ENCODE measurements at regions of chr18 and their contacts with region 1.

Region 1: GRCh38 chr18:43341014-43341413 is 63.7 kb upstream of the SYT4 start:
- DNase-seq: no peak
- H3K4me3 ChIP-seq: no peak overlapping the region
- H3K27ac ChIP-seq: no peak overlapping the region
- H3K4me1 ChIP-seq: no peaks in the 10 kb centered on the region
- H3K27me3 ChIP-seq: no peaks in the 10 kb centered on the region
- CTCF ChIP-seq: no peak
- EP300 ChIP-seq: no peak
- POLR2A ChIP-seq: no peak

Region 2: DNA sequence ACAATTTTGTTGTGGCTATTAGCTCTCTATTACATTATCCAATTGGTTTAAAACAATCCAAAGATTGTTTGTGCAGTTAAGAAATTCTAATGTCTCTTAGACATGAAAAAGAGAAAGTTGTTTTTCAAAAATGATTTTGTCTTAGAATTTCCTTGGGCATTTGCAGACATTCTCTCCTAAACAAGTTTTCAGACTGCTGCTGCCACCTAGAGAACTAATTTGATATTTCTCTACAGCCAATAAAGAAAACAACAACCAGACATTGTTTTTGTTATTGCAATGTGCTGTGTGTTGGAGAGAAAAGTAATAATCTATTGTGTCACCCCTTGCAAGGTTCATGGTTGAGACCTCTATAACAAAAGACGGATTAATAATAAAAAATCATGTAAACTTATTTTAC is 55.3 kb after region 1 on chr18:
- intact Hi-C with region 1: loop called (anchors 10 kb)
- DNase-seq: no peak
- H3K4me3 ChIP-seq: no peak overlapping the region
- H3K27ac ChIP-seq: no peak overlapping the region
- H3K4me1 ChIP-seq: no peaks in the 10 kb centered on the region
- H3K27me3 ChIP-seq: no peaks in the 10 kb centered on the region
- CTCF ChIP-seq: peak in 1 of 3 experiments; percentile 16
- EP300 ChIP-seq: no peak
- POLR2A ChIP-seq: no peak

Region 3: GRCh38 chr18:43719351-43719750 is 378.3 kb after region 1 on chr18:
- intact Hi-C with region 1: no loop called
- DNase-seq: no peak
- H3K4me3 ChIP-seq: no peak overlapping the region
- H3K27ac ChIP-seq: no peak overlapping the region
- H3K4me1 ChIP-seq: no peaks in the 10 kb centered on the region
- H3K27me3 ChIP-seq: no peaks in the 10 kb centered on the region
- CTCF ChIP-seq: no peak
- EP300 ChIP-seq: no peak
- POLR2A ChIP-seq: no peak

Region 4: GRCh38 chr18:44107187-44107586 is 766.2 kb after region 1 on chr18:
- intact Hi-C with region 1: no loop called
- DNase-seq: no peak
- H3K4me3 ChIP-seq: no peak overlapping the region
- H3K27ac ChIP-seq: no peak overlapping the region
- H3K4me1 ChIP-seq: no peaks in the 10 kb centered on the region
- H3K27me3 ChIP-seq: no peaks in the 10 kb centered on the region
- CTCF ChIP-seq: no peak
- EP300 ChIP-seq: no peak
- POLR2A ChIP-seq: no peak

Measured in esophagus muscularis mucosa (tissue), 4 donors.